ENCODE measurements at regions of chr5 and their contacts with region 1.

Region 1: GRCh38 chr5:15003511-15003920 is 131.9 kb upstream of the ANKH start:
- DNase-seq: peak; percentile 70
- H3K4me3 Mint-ChIP-seq: no peak overlapping the region
- H3K27ac Mint-ChIP-seq: no peak overlapping the region
- H3K4me1 Mint-ChIP-seq: no peaks in the 10 kb centered on the region
- H3K27me3 Mint-ChIP-seq: no peaks in the 10 kb centered on the region

Region 2: DNA sequence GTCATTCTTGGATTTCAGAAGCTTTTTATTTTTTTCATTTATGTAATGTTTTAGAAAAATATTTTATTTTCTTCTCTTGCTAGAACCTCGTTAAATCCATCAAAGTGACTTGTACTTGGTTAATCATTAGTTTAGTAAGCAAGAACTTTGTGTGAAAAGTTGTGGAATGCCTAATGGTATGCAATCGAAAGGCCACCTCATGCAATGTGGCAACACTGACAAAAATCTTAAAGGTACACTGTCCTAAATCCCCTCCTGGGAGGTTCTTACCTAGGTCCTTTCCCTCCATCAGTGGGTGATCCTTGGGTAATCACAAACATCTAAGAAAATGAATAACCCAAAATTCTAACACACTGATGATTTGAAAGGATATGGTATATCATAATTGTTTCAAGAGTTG is 1363.2 kb before region 1 on chr5:
- CTCF ChIA-PET with region 1: no interaction called
- intact Hi-C with region 1: no loop called
- DNase-seq: no peak
- H3K4me3 Mint-ChIP-seq: no peak overlapping the region
- H3K27ac Mint-ChIP-seq: no peak overlapping the region
- H3K4me1 Mint-ChIP-seq: no peaks in the 10 kb centered on the region
- H3K27me3 Mint-ChIP-seq: no peaks in the 10 kb centered on the region

Region 3: DNA sequence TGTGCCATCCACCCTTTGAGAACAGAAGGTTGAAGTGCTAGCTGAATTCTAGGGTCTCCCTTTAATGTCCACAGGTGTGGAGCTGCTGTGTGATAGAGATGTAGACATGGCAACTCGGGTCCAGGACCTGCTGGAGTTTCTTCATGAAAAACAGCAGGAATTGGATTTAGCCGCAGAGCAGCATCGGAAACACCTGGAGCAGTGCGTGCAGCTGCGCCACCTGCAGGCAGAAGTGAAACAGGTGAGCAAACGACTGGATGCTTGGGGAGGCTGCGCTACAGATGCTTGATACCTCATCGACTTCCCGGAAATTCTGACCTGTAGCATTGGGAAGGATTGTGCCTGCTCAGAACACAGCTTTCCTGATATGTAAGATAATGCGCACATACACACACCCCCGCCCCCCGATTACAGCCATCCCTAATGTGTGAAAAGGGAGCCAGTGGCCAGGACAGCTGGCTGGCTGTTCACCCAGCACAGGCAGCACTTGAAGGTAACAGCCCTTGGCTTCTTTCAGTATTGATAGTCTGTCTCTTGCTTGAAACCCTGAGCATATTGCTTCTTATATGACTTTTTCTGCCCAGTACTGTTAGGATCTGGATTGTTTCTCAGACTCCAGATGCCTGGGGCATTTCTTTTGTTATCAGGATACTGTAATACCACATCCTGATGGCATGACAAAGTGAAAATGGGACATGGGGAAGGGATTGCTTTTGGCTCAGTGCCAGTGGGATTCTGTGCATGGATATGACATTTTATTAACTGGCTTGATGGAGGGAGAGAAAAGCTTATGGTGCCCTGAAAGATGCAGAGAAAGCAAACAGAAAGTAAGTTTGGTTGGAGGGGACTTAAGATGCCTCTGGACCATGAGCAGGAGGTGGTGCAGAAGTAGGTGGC is 638.7 kb before region 1 on chr5:
- CTCF ChIA-PET with region 1: no interaction called
- intact Hi-C with region 1: loop called (anchors 1 kb)
- DNase-seq: peak; percentile 34
- H3K4me3 Mint-ChIP-seq: no peak overlapping the region
- H3K27ac Mint-ChIP-seq: no peak overlapping the region
- H3K4me1 Mint-ChIP-seq: peaks cover 24% of the 10 kb centered on the region
- H3K27me3 Mint-ChIP-seq: no peaks in the 10 kb centered on the region

Region 4: GRCh38 chr5:14685757-14686156 is 317.8 kb before region 1 on chr5:
- CTCF ChIA-PET with region 1: interaction called, 6 read pairs
- intact Hi-C with region 1: loop called (anchors 1 kb)
- DNase-seq: peak; percentile 55
- H3K4me3 Mint-ChIP-seq: peak overlapping the region; percentile 42
- H3K27ac Mint-ChIP-seq: peak overlapping the region; percentile 68
- H3K4me1 Mint-ChIP-seq: peaks cover 14% of the 10 kb centered on the region
- H3K27me3 Mint-ChIP-seq: no peaks in the 10 kb centered on the region

Region 5: DNA sequence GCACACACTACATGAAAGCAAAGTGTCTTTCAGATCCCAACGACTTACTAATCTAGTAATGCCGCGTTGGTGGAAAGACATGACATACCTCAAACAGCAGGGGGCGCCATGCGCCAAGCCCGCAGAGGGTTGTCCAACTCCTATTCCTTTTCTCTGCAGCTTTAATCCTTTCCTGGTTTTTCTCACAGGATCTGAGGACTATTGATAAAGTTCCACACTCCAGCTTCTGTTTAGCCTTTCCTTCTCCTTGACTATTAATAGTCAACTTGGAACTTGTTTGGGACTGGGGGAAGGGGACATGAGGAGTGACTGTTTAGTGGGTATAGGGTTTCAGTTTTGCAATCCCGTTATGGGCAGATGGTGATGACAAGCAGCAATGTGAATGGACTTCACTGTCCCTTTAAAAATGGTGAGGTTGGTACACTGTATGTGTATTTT is 276.1 kb before region 1 on chr5:
- CTCF ChIA-PET with region 1: interaction called, 165 read pairs
- intact Hi-C with region 1: loop called (anchors 1 kb)
- DNase-seq: peak; percentile 83
- H3K4me3 Mint-ChIP-seq: no peak overlapping the region
- H3K27ac Mint-ChIP-seq: no peak overlapping the region
- H3K4me1 Mint-ChIP-seq: peaks cover 19% of the 10 kb centered on the region
- H3K27me3 Mint-ChIP-seq: no peaks in the 10 kb centered on the region

Region 6: GRCh38 chr5:14958196-14958595 is 45.3 kb before region 1 on chr5:
- CTCF ChIA-PET with region 1: interaction called, 18 read pairs
- intact Hi-C with region 1: loop called (anchors 1 kb)
- DNase-seq: no peak
- H3K4me3 Mint-ChIP-seq: no peak overlapping the region
- H3K27ac Mint-ChIP-seq: no peak overlapping the region
- H3K4me1 Mint-ChIP-seq: no peaks in the 10 kb centered on the region
- H3K27me3 Mint-ChIP-seq: no peaks in the 10 kb centered on the region

Region 7: DNA sequence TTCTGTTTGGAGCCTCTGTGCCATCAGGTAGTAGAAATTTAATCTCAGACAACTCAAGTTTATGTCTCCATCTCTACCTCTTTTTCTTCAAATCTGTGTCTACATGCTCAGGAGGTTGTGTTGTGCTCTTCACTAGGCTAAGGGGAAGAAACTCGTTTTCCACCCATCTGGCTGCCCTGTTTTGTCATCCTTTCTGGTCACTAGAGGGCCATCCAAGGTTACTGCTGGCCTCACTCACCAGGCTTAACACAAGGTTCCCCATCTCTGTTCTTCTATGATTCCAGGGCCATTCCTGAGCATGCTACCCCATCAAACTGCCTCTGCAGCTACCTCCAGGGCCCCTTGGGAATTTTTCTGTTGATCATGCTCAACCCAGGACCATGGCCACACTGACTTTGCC is 283.1 kb after region 1 on chr5:
- CTCF ChIA-PET with region 1: no interaction called
- intact Hi-C with region 1: no loop called
- DNase-seq: no peak
- H3K4me3 Mint-ChIP-seq: no peak overlapping the region
- H3K27ac Mint-ChIP-seq: no peak overlapping the region
- H3K4me1 Mint-ChIP-seq: no peaks in the 10 kb centered on the region
- H3K27me3 Mint-ChIP-seq: no peaks in the 10 kb centered on the region

Region 8: DNA sequence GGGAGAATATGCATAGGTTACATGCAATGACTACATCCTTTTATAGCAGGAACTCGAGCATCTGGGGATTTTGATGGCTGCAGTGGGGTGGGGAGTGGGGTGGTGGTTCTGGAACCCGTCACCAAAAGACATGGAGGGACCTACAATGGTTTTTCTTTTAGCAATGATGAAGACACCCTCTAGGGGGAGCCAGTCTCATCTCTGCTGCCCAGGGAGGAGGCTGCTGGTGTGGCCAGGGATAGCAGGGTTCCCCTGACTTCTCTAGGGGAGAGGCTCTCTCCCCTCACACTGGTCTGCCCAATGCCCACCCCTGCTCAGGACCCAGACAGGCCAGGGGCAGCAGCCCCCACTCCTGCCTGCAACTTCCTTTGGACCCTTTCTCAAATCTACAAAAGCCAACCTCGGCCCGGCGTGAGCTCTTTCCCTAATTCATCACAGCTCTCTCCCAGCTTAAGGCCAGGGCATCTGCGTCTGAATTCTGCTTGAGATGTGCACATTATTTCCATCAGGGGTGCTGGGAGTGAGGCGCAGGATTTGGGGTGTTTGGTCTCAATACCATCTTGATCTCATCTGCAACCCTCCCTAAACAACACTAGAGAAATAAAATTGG is 1686.8 kb after region 1 on chr5:
- CTCF ChIA-PET with region 1: no interaction called
- intact Hi-C with region 1: no loop called
- DNase-seq: peak; percentile 36
- H3K4me3 Mint-ChIP-seq: no peak overlapping the region
- H3K27ac Mint-ChIP-seq: no peak overlapping the region
- H3K4me1 Mint-ChIP-seq: peaks cover 3% of the 10 kb centered on the region
- H3K27me3 Mint-ChIP-seq: no peaks in the 10 kb centered on the region

Measured in activated naive CD4-positive, alpha-beta T cell treated with anti-CD3 and anti-CD28 coated beads for 36 hours (primary cell).